ENCODE measurements at regions of chr10 and their contacts with region 1.

Region 1: GRCh38 chr10:71963756-71964668 is at the start of gene CHST3:
- DNase-seq: peak; percentile 90
- total RNA-seq, gene CHST3: 24.4 TPM

Region 2: GRCh38 chr10:71999360-72000072 is 35.5 kb after region 1 on chr10:
- intact Hi-C with region 1: loop called (anchors 5 kb)
- DNase-seq: peak; percentile 86